ENCODE measurements at regions of chr6 and their contacts with region 1.

Region 1: GRCh38 chr6:16128759-16129622 is at the start of gene MYLIP:
- DNase-seq: peak; percentile 96 to 99 (median 97)
- ATAC-seq: peak; percentile 81
- H3K4me3 ChIP-seq: peak within 1 kb of the TSS; percentile 75 to 96
- H3K4me3 Mint-ChIP-seq: peak within 1 kb of the TSS; percentile 96
- H3K27ac ChIP-seq: peak within 1 kb of the TSS; percentile 90 to 94
- H3K27ac Mint-ChIP-seq: peak within 1 kb of the TSS; percentile 96
- H3K4me1 ChIP-seq: peaks cover 29% of the 10 kb centered on the region
- H3K4me1 Mint-ChIP-seq: peaks cover 33% of the 10 kb centered on the region
- H3K27me3 ChIP-seq: peaks cover 0 to 2% of the 10 kb centered on the region in 2 experiments
- H3K27me3 Mint-ChIP-seq: no peaks in the 10 kb centered on the region
- CTCF ChIP-seq: peak; percentile 61
- total RNA-seq, gene MYLIP: 225 to 231 TPM

Region 2: GRCh38 chr6:15691250-15691869 is 437.6 kb before region 1 on chr6:
- CTCF ChIA-PET with region 1: interaction called, 4 read pairs
- POLR2A ChIA-PET with region 1: interaction called, 5 read pairs
- intact Hi-C with region 1: loop called (anchors 1 to 5 kb)
- DNase-seq: peak; percentile 55 to 92 (median 76)
- ATAC-seq: peak; percentile 100
- H3K4me3 ChIP-seq: no peak overlapping the region
- H3K4me3 Mint-ChIP-seq: no peak overlapping the region
- H3K27ac ChIP-seq: no peak overlapping the region
- H3K27ac Mint-ChIP-seq: no peak overlapping the region
- H3K4me1 ChIP-seq: no peaks in the 10 kb centered on the region
- H3K4me1 Mint-ChIP-seq: peaks cover 4% of the 10 kb centered on the region
- H3K27me3 ChIP-seq: no peaks in the 10 kb centered on the region
- H3K27me3 Mint-ChIP-seq: peaks cover 8% of the 10 kb centered on the region
- CTCF ChIP-seq: peak; percentile 100

Region 3: DNA sequence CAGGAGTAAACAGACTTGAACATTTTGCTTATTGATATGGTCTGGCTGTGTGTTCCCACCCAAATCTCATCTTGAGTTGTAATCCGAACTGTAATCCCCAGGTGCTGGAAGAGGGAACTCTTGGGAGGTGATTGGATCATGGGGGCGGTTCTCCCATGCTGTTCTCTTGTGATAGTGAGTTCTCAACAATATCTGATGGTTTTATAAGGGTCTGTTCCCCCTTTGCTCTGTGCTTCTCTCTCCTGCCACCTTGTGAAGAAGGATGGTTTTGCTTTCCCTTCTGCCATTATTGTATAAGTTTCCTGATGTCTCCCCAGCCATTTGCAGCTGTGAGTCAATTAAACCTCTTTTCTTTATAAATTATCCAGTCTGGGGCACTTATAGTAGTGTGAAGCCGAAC is 39.9 kb after region 1 on chr6:
- CTCF ChIA-PET with region 1: interaction called, 3 read pairs
- POLR2A ChIA-PET with region 1: interaction called, 5 read pairs
- intact Hi-C with region 1: loop called in 1 of 2 experiments (anchors 2 kb)
- DNase-seq: peak in 3 of 9 experiments; percentile 25 to 65 (median 49)
- ATAC-seq: peak; percentile 63
- H3K4me3 ChIP-seq: no peak overlapping the region
- H3K4me3 Mint-ChIP-seq: no peak overlapping the region
- H3K27ac ChIP-seq: no peak overlapping the region
- H3K27ac Mint-ChIP-seq: no peak overlapping the region
- H3K4me1 ChIP-seq: peaks cover 10% of the 10 kb centered on the region
- H3K4me1 Mint-ChIP-seq: peaks cover 23% of the 10 kb centered on the region
- H3K27me3 ChIP-seq: no peaks in the 10 kb centered on the region
- H3K27me3 Mint-ChIP-seq: no peaks in the 10 kb centered on the region
- CTCF ChIP-seq: peak; percentile 52

Region 4: GRCh38 chr6:16206595-16207037 is 77.6 kb after region 1 on chr6:
- CTCF ChIA-PET with region 1: interaction called, 8 read pairs
- POLR2A ChIA-PET with region 1: interaction called, 3 read pairs
- intact Hi-C with region 1: loop called in 1 of 2 experiments (anchors 2 kb)
- DNase-seq: peak; percentile 2 to 68 (median 39)
- ATAC-seq: peak; percentile 79
- H3K4me3 ChIP-seq: no peak overlapping the region
- H3K4me3 Mint-ChIP-seq: no peak overlapping the region
- H3K27ac ChIP-seq: no peak overlapping the region
- H3K27ac Mint-ChIP-seq: no peak overlapping the region
- H3K4me1 ChIP-seq: no peaks in the 10 kb centered on the region
- H3K4me1 Mint-ChIP-seq: no peaks in the 10 kb centered on the region
- H3K27me3 ChIP-seq: no peaks in the 10 kb centered on the region
- H3K27me3 Mint-ChIP-seq: peaks cover 8% of the 10 kb centered on the region
- CTCF ChIP-seq: peak; percentile 100

Region 5: DNA sequence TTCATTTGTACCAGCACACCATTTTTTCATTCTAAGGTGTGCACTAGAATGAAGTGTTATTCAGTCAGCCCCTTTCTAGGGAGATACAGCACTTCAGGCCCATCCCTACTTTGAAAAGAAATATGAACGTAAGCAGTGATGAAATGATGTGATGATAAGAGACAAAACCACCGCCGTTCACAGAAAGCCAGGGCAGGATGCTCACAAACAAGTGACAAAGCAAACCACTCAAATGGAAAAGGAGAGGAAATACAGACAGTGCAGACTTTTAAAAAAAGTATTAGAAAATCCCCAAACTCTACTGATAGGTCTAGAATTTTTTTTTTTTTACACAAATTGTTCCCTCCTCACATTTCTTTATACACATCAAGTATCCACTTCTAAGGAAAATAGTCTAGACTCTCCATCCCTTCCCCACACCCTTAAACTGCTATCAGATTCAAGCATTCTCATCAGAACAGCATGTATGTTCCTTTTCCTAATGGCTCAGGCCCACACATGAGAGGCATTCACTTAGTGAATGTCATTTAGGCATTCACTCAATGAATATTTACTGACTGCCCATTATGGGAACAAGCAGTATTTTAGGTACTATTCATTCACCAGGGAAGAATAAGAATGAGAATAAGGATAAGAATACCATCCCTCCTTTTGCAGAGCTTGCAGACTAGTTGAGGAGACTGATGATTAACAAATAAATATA is 352.9 kb after region 1 on chr6:
- CTCF ChIA-PET with region 1: no interaction called
- POLR2A ChIA-PET with region 1: no interaction called
- intact Hi-C with region 1: loop called (anchors 2 to 10 kb)
- DNase-seq: peak; percentile 30 to 95 (median 61)
- ATAC-seq: peak; percentile 81
- H3K4me3 ChIP-seq: no peak overlapping the region
- H3K4me3 Mint-ChIP-seq: peak overlapping the region; percentile 52
- H3K27ac ChIP-seq: peak overlapping the region; percentile 28 to 83
- H3K27ac Mint-ChIP-seq: peak overlapping the region; percentile 95
- H3K4me1 ChIP-seq: peaks cover 61% of the 10 kb centered on the region
- H3K4me1 Mint-ChIP-seq: peaks cover 77% of the 10 kb centered on the region
- H3K27me3 ChIP-seq: no peaks in the 10 kb centered on the region
- H3K27me3 Mint-ChIP-seq: no peaks in the 10 kb centered on the region
- CTCF ChIP-seq: no peak

Region 6: GRCh38 chr6:17700421-17701416 is 1571.7 kb after region 1 on chr6:
- CTCF ChIA-PET with region 1: no interaction called
- POLR2A ChIA-PET with region 1: no interaction called
- intact Hi-C with region 1: loop called (anchors 5 to 10 kb)
- DNase-seq: no peak
- ATAC-seq: no peak
- H3K4me3 ChIP-seq: no peak overlapping the region
- H3K4me3 Mint-ChIP-seq: no peak overlapping the region
- H3K27ac ChIP-seq: peak overlapping the region in 1 of 2 experiments; percentile 3
- H3K27ac Mint-ChIP-seq: peak overlapping the region; percentile 74
- H3K4me1 ChIP-seq: peaks cover 34% of the 10 kb centered on the region
- H3K4me1 Mint-ChIP-seq: peaks cover 62% of the 10 kb centered on the region
- H3K27me3 ChIP-seq: no peaks in the 10 kb centered on the region
- H3K27me3 Mint-ChIP-seq: no peaks in the 10 kb centered on the region
- CTCF ChIP-seq: no peak